OCI-LY7 (cell line): ENCODE measurements at regions of chr10 and their contacts with region 1.

Region 1: GRCh38 chr10:130110246-130111112 is at the start of gene C10orf143:
- DNase-seq: peak; percentile 96
- H3K4me3 ChIP-seq: peak within 1 kb of the TSS; percentile 95
- H3K27ac ChIP-seq: peak within 1 kb of the TSS; percentile 80
- H3K4me1 ChIP-seq: peaks cover 36% of the 10 kb centered on the region
- CTCF ChIP-seq: no peak
- total RNA-seq, gene C10orf143: 0.64 and 0.88 TPM in 2 replicates

Region 2: DNA sequence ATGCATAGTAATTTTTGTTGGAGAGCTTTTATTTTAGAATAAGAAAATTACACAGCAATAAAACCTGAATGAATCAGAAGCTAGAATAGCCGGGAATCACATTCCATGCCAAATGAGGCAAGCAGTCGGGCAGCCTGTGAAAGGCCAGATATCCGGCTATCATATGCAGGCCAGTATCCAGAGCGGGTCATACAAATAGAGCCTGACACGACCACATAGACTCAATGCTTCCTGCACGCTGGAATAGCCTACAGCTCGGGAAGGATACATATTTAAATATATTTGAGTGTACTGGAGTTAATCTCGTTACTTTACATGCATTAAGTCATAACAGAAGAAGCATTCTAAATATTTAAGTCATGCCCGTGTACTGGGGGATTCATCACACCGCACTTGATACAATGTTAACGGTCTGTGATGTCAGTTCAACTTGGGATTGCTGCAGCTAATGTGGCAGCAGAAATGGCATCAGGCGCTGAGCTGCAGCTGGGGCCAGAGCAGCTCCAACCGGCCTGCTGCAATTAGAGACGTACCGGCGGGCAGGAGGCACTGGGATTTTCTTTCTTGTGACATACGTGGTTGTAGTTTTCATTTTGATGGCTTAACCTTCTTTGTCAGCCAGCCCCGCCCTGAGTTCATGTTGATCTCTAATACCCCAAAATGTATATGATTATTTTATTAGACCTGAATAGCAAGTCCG is 258.4 kb before region 1 on chr10:
- CTCF ChIA-PET with region 1: no interaction called
- POLR2A ChIA-PET with region 1: no interaction called
- intact Hi-C with region 1: no loop called
- DNase-seq: no peak
- H3K4me3 ChIP-seq: no peak overlapping the region
- H3K27ac ChIP-seq: no peak overlapping the region
- H3K4me1 ChIP-seq: no peaks in the 10 kb centered on the region
- CTCF ChIP-seq: no peak

Region 3: DNA sequence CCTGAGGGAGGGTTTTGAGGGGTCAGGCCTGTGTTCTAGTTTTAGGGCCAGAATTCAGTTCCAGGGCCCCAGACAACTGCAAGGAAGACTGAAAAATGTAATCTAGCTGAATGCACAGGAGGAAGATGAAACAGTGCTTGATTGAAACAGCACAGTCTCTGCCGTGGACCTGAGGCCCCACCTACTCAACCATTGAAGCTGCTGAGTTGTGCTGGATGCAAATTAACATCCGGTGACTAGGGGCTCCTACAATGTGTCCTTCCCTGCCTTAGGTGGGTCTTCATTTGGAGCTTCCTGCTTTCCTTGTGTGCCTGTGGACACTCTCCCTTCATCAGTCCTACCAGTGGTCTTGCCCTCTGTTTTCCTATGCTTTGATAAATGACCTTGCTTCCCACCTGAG is 31.4 kb after region 1 on chr10:
- CTCF ChIA-PET with region 1: interaction called, 5 read pairs
- POLR2A ChIA-PET with region 1: interaction called, 64 read pairs
- intact Hi-C with region 1: loop called (anchors 1 kb)
- DNase-seq: peak; percentile 76
- H3K4me3 ChIP-seq: peak overlapping the region; percentile 61
- H3K27ac ChIP-seq: peak overlapping the region; percentile 88
- H3K4me1 ChIP-seq: peaks cover 72% of the 10 kb centered on the region
- CTCF ChIP-seq: no peak